HepG2 (cell line): ENCODE measurements at regions of chr16 and their contacts with region 1.

Region 1: DNA sequence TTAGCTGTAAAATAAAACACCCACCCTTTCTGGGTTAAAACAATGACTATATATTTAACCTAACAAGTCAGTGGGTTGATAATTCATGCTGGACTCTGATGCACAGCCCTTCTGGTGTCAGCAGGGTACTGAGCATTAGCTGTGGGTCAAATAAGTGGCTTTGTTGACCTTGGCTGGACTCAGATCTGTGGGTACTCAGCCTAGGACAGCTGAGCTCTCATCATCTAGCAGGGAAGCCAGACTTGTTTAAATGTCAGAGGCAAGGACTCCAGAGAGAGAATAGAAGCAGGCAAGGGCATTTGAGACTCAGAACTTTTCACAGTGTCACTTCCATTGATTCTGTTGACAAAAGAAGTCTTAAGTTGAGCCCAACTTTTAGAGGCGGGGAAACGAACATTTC is 1063.8 kb upstream of the CDH8 start:
- DNase-seq: no peak
- ATAC-seq: no peak
- H3K4me3 ChIP-seq: no peak overlapping the region
- H3K27ac ChIP-seq: no peak overlapping the region
- H3K4me1 ChIP-seq: no peaks in the 10 kb centered on the region
- H3K27me3 ChIP-seq: no peaks in the 10 kb centered on the region
- CTCF ChIP-seq: no peak
- EP300 ChIP-seq: no peak
- POLR2A ChIP-seq: no peak
- RAD21 ChIP-seq: no peak

Region 2: DNA sequence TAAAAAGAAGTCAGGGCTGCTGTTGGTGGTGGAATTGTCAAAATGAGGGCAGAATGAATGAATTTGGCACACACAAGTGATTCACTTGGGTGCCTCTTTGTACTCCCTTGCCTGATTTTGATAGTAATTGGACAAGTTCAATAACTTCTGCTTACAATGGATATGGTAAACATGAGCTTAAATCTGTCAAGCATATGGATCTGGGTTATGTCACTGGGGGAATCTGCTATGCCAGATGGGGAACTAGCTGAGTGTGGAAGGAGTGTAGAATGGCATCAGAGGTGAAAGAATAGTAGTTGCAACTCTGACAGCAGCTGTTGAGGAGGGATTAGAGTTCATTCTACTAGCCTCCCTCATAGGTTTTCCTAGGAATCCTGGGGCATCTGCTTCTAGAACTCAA is 339.7 kb before region 1 on chr16:
- CTCF ChIA-PET with region 1: no interaction called
- POLR2A ChIA-PET with region 1: no interaction called
- in situ Hi-C with region 1: no loop called
- intact Hi-C with region 1: no loop called
- DNase-seq: no peak
- ATAC-seq: no peak
- H3K4me3 ChIP-seq: no peak overlapping the region
- H3K27ac ChIP-seq: no peak overlapping the region
- H3K4me1 ChIP-seq: no peaks in the 10 kb centered on the region
- H3K27me3 ChIP-seq: no peaks in the 10 kb centered on the region
- CTCF ChIP-seq: no peak
- EP300 ChIP-seq: no peak
- POLR2A ChIP-seq: no peak
- RAD21 ChIP-seq: no peak

Region 3: GRCh38 chr16:63145411-63145810 is 45.3 kb after region 1 on chr16:
- CTCF ChIA-PET with region 1: no interaction called
- POLR2A ChIA-PET with region 1: no interaction called
- in situ Hi-C with region 1: loop called (anchors 5 kb)
- intact Hi-C with region 1: no loop called
- DNase-seq: no peak
- ATAC-seq: no peak
- H3K4me3 ChIP-seq: no peak overlapping the region
- H3K27ac ChIP-seq: no peak overlapping the region
- H3K4me1 ChIP-seq: no peaks in the 10 kb centered on the region
- H3K27me3 ChIP-seq: no peaks in the 10 kb centered on the region
- CTCF ChIP-seq: no peak
- EP300 ChIP-seq: no peak
- POLR2A ChIP-seq: no peak
- RAD21 ChIP-seq: no peak